Psoas muscle (tissue), 8 donors: ENCODE measurements at regions of chrX and their contacts with region 1.

Region 1: GRCh38 chrX:120125444-120125843 is 9.7 kb upstream of the RHOXF1 start:
- DNase-seq: no peak
- ATAC-seq: no peak
- H3K4me3 ChIP-seq: peak overlapping the region; percentile 8
- H3K27ac ChIP-seq: no peak overlapping the region
- H3K4me1 ChIP-seq: no peaks in the 10 kb centered on the region
- H3K27me3 ChIP-seq: no peaks in the 10 kb centered on the region
- CTCF ChIP-seq: no peak

Region 2: GRCh38 chrX:119954374-119954773 is 171.1 kb before region 1 on chrX:
- intact Hi-C with region 1: no loop called
- DNase-seq: no peak
- ATAC-seq: no peak
- H3K4me3 ChIP-seq: no peak overlapping the region
- H3K27ac ChIP-seq: no peak overlapping the region
- H3K4me1 ChIP-seq: no peaks in the 10 kb centered on the region
- H3K27me3 ChIP-seq: no peaks in the 10 kb centered on the region
- CTCF ChIP-seq: no peak

Region 3: GRCh38 chrX:120228187-120228908 is 102.9 kb after region 1 on chrX:
- intact Hi-C with region 1: loop called in 1 of 2 experiments (anchors 5 kb)
- DNase-seq: no peak
- ATAC-seq: no peak
- H3K4me3 ChIP-seq: no peak overlapping the region
- H3K27ac ChIP-seq: no peak overlapping the region
- H3K4me1 ChIP-seq: no peaks in the 10 kb centered on the region
- H3K27me3 ChIP-seq: no peaks in the 10 kb centered on the region
- CTCF ChIP-seq: no peak